Activated CD4-positive, alpha-beta T cell treated with anti-CD3 and anti-CD28 coated beads, Interleukin-2, amount 10 ng/mL, durations not matched to agents 24 days and 14 days (primary cell): ENCODE measurements at regions of chr16 and their contacts with region 1.

Region 1: DNA sequence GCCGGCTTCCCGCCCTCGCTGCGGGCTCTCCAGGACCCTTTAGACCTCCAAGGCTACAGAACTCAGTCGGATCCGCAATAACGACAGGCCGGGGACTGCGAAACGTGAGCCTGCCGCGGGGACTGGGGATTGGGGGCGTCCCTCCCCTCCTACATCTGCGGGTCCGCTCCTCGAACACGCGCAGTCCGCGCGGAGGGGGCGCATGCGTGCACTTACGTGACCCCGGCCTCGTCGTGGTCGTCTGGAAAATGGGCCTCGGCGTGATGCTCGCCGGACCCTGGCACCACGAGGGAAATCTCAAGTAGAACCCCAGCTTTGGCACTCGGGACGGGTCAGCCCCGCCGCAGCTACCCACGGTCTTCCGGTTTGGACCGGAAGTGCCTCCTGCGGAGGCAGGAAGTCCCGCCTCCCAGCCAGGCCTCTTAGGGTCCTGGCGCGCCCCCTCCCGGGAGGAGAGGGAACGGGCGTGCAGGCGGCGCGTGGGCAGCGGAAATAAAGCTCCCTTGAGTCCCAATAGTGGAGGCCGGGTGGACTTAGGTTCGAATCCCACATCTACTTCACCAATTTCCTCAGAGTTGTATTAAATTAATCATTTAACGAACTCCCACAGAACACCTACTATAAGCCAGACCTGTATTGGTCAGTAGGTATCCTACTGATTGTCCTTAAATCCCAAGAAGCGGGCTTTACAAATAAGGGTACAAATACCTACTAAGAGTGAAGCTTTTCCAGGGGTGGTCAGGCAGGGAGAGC is at the start of gene TAF1C:
- DNase-seq: peak; percentile 97
- H3K4me3 Mint-ChIP-seq: peak within 1 kb of the TSS; percentile 94
- H3K27ac Mint-ChIP-seq: peak within 1 kb of the TSS; percentile 95
- H3K4me1 Mint-ChIP-seq: peaks cover 18% of the 10 kb centered on the region
- H3K27me3 Mint-ChIP-seq: no peaks in the 10 kb centered on the region
- total RNA-seq, gene TAF1C: 60.3 and 61.1 TPM in 2 replicates

Region 2: GRCh38 chr16:84144859-84145639 is 41.8 kb before region 1 on chr16 and contains the starts of genes DNAAF1 and HSDL1:
- intact Hi-C with region 1: loop called (anchors 1 kb)
- DNase-seq: peak; percentile 99
- H3K4me3 Mint-ChIP-seq: peak within 1 kb of the TSS; percentile 94
- H3K27ac Mint-ChIP-seq: peak within 1 kb of the TSS; percentile 86
- H3K4me1 Mint-ChIP-seq: peaks cover 11% of the 10 kb centered on the region
- H3K27me3 Mint-ChIP-seq: peaks cover 16% of the 10 kb centered on the region
- total RNA-seq, gene DNAAF1: not detected in 2 replicates
- total RNA-seq, gene HSDL1: 16.4 and 17.6 TPM in 2 replicates

Region 3: DNA sequence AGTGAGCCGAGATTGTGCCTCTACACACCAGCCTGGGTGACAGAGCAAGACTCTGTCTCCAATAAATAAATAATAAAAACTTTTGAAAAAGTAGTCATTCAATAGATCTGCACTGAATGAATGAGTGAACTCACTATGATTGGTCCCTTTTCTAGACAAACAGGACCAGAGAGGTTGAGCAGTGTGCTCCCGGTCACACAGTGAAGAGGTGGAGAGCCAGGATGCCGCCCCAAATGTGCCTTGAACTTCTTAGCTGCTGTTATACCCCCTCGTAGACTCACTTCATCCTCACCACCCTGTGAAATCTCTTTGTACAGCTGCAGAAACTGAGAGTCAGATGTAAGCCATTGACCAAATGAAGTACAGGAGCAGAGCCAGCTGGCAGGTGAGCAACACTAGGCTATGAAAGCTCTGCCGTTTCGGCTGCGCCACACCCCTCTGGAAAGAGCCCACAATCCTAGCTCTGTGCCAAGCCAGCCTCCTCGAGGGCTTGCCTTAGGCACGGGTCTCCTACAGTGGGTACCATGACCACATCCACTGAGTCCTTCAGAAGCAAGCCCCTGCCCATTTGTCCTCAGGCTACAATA is 832.9 kb after region 1 on chr16:
- intact Hi-C with region 1: loop called (anchors 5 kb)
- DNase-seq: no peak
- H3K4me3 Mint-ChIP-seq: no peak overlapping the region
- H3K27ac Mint-ChIP-seq: no peak overlapping the region
- H3K4me1 Mint-ChIP-seq: peaks cover 10% of the 10 kb centered on the region
- H3K27me3 Mint-ChIP-seq: peaks cover 20% of the 10 kb centered on the region